Sigmoid colon (tissue), 7 donors: ENCODE measurements at regions of chr17 and their contacts with region 1.

Region 1: DNA sequence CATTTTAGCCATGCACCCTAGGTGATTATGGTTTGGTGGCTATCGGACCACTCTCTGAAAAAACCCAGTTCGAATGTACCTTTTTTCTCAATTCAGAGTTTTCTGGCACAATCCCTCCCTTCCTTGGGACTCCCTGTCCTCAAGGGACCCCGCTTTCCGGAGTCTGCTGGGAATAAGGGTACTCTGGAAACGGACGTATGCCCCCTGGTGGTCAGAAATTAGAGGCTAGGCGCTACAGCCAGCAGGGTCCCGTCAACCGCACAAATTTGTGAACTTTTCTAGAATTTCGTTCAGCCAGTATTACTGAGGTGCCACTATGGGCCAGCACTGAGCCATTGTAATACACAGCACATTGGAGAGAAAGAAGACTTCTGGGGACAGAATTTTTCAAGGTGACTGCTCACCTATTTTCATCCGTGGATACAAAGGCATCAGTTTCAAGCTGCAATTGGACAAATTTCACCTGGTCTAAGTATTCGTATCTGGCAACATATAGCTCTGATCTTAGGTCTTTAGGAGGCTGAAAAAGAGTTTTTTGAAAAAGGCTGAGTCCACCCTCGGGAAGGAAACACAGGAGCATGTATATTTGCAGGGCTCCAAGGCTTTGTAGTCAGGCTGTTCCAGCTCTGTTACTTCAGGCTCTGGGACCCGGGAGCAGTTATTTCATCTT is 27.1 kb upstream of the CRYBA1 start:
- DNase-seq: peak; percentile 88
- H3K4me3 ChIP-seq: no peak overlapping the region
- H3K27ac ChIP-seq: no peak overlapping the region
- H3K4me1 ChIP-seq: peaks cover 0 to 9% (median 7%) of the 10 kb centered on the region in 4 donors
- H3K27me3 ChIP-seq: no peaks in the 10 kb centered on the region
- CTCF ChIP-seq: peak; percentile 73 to 95 (median 86)
- EP300 ChIP-seq: no peak
- POLR2A ChIP-seq: no peak

Region 2: DNA sequence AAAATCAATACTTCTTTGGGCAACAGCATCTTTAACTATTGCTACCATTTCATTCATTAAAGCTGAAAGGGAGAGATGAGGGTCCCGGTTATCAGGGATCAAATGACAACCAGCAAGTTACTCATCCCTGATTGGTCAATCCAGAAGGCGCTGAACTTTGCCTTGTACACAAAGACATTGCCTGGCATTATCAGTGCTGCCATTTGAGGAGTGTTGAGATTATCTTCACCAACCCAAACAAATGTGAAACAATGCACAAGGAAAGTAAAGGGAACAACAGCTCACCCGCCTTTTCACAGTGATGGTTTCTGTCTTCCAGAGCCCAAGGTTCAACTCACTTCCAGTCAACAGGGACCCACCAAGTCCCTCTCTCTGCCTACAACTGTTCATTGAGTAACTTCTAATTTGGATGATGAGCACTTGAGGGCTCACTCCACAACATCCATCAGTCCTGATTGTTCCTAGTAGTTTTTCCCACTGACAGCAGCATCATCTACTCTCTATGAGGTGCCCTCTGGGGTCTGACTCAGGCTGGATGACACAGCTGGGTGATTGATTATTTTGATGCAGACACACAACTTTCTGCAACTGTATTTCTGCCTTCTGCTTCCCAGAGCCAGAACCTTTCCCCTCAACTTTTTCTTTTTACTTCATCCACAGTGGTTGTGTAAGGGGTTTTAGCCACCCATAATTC is 1358.4 kb before region 1 on chr17:
- intact Hi-C with region 1: no loop called
- DNase-seq: no peak
- H3K4me3 ChIP-seq: no peak overlapping the region
- H3K27ac ChIP-seq: no peak overlapping the region
- H3K4me1 ChIP-seq: no peaks in the 10 kb centered on the region
- H3K27me3 ChIP-seq: no peaks in the 10 kb centered on the region
- CTCF ChIP-seq: no peak
- EP300 ChIP-seq: no peak
- POLR2A ChIP-seq: no peak

Region 3: DNA sequence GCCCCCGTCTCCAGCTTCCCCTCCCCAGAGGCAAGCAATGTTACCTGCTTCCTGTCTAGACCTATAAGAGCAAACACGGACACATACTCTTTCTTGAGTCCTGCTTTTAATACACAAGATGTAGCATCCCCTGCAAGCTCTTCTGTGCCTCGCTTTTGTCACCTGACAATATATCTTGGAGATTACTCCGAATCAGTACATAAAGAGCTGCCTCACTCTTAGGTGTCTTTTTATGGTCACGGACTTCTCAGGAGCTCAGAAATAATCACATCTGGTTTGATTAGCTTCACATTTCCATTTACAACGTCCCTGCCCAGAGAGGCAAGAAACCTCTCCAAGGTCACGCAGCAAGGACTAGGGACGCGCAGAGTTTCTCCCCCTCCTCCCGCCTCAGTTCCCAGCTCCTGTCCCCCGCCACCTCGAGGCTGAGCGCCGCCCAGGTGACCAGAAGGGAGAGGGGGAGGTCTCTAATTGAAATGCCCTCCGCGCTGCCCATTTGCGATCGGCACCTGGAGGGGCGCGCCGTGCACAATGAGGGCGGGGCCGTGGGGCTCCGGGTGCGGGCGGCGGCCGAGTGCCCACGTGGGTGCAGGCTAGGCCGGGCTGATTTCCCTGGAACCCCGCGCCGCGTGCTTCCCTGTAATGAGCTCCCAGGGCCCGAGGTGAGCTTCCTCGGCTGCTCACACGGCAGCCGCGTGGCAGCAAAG is 199.9 kb before region 1 on chr17:
- intact Hi-C with region 1: no loop called
- DNase-seq: no peak
- H3K4me3 ChIP-seq: no peak overlapping the region
- H3K27ac ChIP-seq: no peak overlapping the region
- H3K4me1 ChIP-seq: peaks cover 0 to 6% (median 0%) of the 10 kb centered on the region in 4 donors
- H3K27me3 ChIP-seq: peaks cover 0 to 23% (median 3%) of the 10 kb centered on the region in 3 donors
- CTCF ChIP-seq: no peak
- EP300 ChIP-seq: no peak
- POLR2A ChIP-seq: no peak

Region 4: GRCh38 chr17:29180034-29180787 is 39.3 kb before region 1 on chr17 and contains the start of gene MYO18A:
- intact Hi-C with region 1: loop called (anchors 2 kb)
- DNase-seq: peak; percentile 87
- H3K4me3 ChIP-seq: peak within 1 kb of the TSS; percentile 43 to 73 (median 70)
- H3K27ac ChIP-seq: peak within 1 kb of the TSS; percentile 83 to 89 (median 86)
- H3K4me1 ChIP-seq: peaks cover 0 to 48% (median 41%) of the 10 kb centered on the region in 4 donors
- H3K27me3 ChIP-seq: no peaks in the 10 kb centered on the region
- CTCF ChIP-seq: peak; percentile 62 to 89 (median 78)
- EP300 ChIP-seq: no peak
- POLR2A ChIP-seq: no peak
- total RNA-seq, gene MYO18A: 28.2 to 90.3 (median 53.4) TPM